Adrenal gland (tissue), 19 donors: ENCODE measurements at regions of chr9 and their contacts with region 1.

Region 1: DNA sequence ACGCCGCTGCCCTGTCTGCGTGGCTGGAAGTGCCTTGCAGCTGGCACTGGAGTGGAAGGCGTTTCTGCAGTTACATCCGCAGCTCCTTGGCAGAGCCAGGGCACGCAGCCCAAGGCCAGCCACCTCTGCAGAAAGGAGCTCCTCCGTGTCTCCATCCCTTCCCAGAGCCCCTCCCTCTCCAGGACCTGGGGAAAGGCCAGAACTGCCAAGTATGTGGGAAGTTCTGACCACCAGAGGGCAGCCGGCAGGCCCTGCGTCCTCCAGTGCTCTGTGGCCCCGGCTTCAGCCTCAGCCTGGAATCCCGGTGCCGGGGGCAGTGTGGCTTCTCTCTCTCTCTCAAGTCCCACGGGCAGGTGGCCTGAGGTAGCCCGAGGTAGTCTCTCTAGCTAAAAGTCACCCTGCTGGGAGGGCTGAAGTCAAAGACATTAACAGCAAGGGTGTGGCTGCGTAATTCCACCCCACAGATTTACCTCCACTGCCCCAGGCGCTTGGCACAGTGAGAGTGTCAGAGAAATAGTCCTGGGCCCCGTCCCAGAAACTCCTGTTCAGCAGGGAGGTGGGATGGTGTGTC is 101.7 kb upstream of the FCN2 start:
- DNase-seq: peak; percentile 68 to 93 (median 88)
- H3K4me3 ChIP-seq: no peak overlapping the region
- H3K27ac ChIP-seq: no peak overlapping the region
- H3K4me1 ChIP-seq: peaks cover 0 to 7% of the 10 kb centered on the region in 2 donors
- H3K27me3 ChIP-seq: no peaks in the 10 kb centered on the region
- CTCF ChIP-seq: peak; percentile 47 to 76 (median 64)
- POLR2A ChIP-seq: no peak

Region 2: DNA sequence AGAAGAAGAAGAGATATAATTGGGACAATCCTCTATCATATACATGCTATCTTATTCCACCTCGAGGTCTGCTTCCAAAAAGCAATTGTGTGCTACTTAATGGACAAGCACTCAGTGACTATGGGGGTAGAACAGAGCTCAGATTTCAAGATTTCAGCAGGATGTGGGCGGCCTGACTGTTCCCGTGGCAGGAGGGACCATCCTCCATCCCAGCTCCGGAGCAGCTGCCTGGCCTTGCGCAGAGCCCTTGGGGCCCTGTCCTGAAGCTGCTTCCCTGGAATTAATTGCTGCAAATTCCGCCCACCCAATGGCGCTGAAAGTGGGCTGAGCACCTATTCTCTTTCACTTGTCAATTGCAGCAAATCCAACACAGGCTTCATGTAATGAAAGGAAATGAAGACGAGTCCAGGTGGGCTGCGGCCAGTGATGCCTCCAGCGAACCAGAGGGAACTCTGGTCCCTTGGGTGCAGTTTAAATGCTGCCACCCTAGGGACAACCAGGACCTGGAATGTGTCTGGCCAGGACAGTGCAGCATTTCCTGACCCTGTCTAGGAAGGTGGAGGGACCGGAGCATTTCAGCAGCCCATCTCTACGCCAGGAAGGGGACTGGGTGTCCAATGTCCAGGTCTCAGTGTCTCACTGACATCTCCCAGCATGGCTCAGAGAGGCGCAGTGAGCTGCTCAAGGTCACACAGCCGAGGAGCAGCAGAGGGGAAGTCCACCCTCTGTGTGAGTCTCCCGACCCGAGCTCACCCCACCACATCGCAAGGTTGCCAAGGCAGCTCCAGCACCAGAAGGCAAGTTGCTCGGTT is 189.3 kb after region 1 on chr9:
- intact Hi-C with region 1: loop called in 1 of 2 experiments (anchors 10 kb)
- DNase-seq: no peak
- H3K4me3 ChIP-seq: no peak overlapping the region
- H3K27ac ChIP-seq: no peak overlapping the region
- H3K4me1 ChIP-seq: peaks cover 0 to 5% of the 10 kb centered on the region in 2 donors
- H3K27me3 ChIP-seq: peaks cover 5% of the 10 kb centered on the region
- CTCF ChIP-seq: no peak
- POLR2A ChIP-seq: no peak

Region 3: DNA sequence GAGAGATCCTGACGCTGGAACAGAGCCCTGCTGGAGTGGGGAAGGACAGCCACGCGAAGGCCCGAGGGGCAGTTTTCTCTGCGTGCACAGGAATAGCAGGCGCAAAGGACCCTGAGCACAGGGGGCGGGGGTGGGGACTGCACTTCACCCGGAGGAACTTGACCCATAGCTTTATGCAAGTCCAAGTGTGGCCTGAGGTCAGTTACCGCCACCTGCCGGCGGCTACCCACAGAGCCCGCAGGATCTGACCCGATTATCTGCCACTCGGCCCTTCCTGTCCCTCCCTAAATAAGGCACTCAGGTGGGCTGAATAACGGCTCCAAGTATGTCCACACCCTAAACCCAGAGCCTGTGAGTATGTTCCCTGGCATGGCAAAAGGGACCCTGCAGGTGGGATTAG is 204.1 kb after region 1 on chr9:
- intact Hi-C with region 1: loop called in 1 of 2 experiments (anchors 10 kb)
- DNase-seq: peak in 5 of 7 donors; percentile 36 to 66 (median 44)
- H3K4me3 ChIP-seq: no peak overlapping the region
- H3K27ac ChIP-seq: no peak overlapping the region
- H3K4me1 ChIP-seq: no peaks in the 10 kb centered on the region
- H3K27me3 ChIP-seq: no peaks in the 10 kb centered on the region
- CTCF ChIP-seq: peak; percentile 14 to 63 (median 44)
- POLR2A ChIP-seq: no peak